ENCODE measurements at regions of chr4 and their contacts with region 1.

Region 1: GRCh38 chr4:22427675-22428074 is 88.2 kb downstream of the ADGRA3 start:
- DNase-seq: no peak
- H3K4me3 ChIP-seq: no peak overlapping the region
- H3K27ac ChIP-seq: no peak overlapping the region
- H3K4me1 ChIP-seq: no peaks in the 10 kb centered on the region
- H3K27me3 ChIP-seq: no peaks in the 10 kb centered on the region
- CTCF ChIP-seq: no peak
- EP300 ChIP-seq: no peak
- POLR2A ChIP-seq: no peak

Region 2: GRCh38 chr4:22607382-22607781 is 179.7 kb after region 1 on chr4:
- in situ Hi-C with region 1: loop called in 2 of 4 experiments (anchors 25 kb)
- intact Hi-C with region 1: loop called (anchors 10 kb)
- DNase-seq: peak; percentile 56
- H3K4me3 ChIP-seq: no peak overlapping the region
- H3K27ac ChIP-seq: no peak overlapping the region
- H3K4me1 ChIP-seq: no peaks in the 10 kb centered on the region
- H3K27me3 ChIP-seq: no peaks in the 10 kb centered on the region
- CTCF ChIP-seq: peak; percentile 53 to 69 (median 62)
- EP300 ChIP-seq: no peak
- POLR2A ChIP-seq: no peak

Region 3: DNA sequence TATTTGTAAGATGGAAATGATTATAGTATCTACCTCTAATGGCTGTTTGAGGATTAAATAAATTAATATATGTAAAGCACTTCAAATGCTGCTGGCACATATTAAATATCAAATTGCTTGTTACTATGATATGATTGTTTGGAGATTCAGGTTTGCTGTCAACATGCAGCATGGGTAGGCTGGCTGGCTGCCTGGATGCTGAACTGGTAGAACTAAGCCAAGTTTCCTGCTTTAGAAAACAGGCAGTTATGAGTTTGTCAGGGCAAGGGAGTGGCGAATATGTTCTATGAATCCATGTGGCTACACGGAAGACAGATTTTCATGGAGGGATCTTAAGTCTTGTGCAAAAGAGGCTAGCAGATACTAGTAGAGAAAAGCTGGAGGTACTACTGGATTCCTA is 504.7 kb after region 1 on chr4:
- in situ Hi-C with region 1: no loop called
- intact Hi-C with region 1: no loop called
- DNase-seq: peak; percentile 17
- H3K4me3 ChIP-seq: no peak overlapping the region
- H3K27ac ChIP-seq: no peak overlapping the region
- H3K4me1 ChIP-seq: no peaks in the 10 kb centered on the region
- H3K27me3 ChIP-seq: no peaks in the 10 kb centered on the region
- CTCF ChIP-seq: no peak
- EP300 ChIP-seq: no peak
- POLR2A ChIP-seq: no peak

Region 4: DNA sequence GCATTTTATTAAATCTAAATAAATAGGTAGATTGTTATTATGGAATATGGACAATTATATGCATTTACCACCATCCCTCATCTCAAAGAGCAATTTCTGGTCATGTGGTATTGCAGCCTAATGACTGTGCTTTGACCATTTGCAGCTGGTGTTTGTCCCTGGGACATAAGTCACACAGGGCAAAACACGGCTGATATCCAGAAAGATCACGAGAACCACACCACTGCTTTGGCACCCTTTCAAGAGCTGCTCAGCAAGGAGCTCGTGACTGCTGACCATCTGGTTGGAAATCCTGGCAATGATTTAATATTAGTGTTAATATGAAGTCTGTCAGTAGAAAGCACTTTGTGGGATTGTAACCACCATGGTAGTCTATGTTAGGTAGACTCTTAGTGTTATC is 810.1 kb after region 1 on chr4:
- in situ Hi-C with region 1: no loop called
- intact Hi-C with region 1: no loop called
- DNase-seq: no peak
- H3K4me3 ChIP-seq: no peak overlapping the region
- H3K27ac ChIP-seq: no peak overlapping the region
- H3K4me1 ChIP-seq: no peaks in the 10 kb centered on the region
- H3K27me3 ChIP-seq: no peaks in the 10 kb centered on the region
- CTCF ChIP-seq: no peak
- EP300 ChIP-seq: no peak
- POLR2A ChIP-seq: no peak

Measured in transverse colon (tissue), 4 donors.